ENCODE measurements at regions of chr7 and their contacts with region 1.

Region 1: DNA sequence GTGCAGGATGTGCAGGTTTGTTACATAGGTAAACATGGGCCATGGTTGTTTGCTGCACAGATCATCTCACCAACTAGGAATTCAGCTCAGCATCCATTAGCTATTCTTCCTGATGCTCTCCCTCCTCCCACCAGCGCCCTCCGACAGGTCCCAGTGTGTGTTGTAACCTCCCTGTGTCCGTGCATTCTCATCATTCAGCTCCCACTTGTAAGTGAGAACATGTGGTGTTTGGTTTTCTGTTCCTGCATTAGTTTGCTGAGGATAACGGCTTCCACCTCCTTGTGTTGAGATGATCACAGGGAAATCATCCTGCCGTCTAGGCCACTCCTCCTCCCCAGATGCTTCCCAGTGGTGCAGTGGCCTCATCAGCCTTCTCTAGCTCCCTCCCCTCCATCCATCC is 261.6 kb upstream of the GALNT17 start:
- DNase-seq: no peak
- ATAC-seq: no peak
- H3K4me3 ChIP-seq: no peak overlapping the region
- H3K27ac ChIP-seq: no peak overlapping the region
- H3K4me1 ChIP-seq: no peaks in the 10 kb centered on the region
- H3K27me3 ChIP-seq: no peaks in the 10 kb centered on the region
- CTCF ChIP-seq: no peak
- POLR2A ChIP-seq: no peak

Region 2: DNA sequence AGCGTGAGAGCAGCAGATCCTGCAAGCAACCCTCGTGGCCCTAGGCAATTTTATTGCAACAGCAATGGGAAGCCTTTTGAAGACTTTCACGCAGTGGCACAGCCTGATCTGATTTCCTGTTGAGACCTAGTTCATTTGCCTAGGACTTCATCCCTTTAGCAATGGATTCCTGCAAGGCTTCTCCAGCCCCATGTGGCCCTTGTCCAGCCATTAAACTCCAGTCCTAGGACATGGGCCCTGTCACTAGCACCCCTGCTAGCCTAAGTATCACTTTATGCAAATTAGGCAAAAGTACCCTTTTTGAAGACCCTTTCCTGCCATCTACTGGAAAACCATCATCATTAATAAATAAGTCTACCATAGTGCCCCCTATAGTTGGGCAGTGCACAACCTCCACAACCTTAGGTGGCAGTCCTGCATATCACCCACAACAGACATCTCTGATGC is 641.0 kb after region 1 on chr7:
- intact Hi-C with region 1: loop called in 2 of 10 experiments (anchors 10 kb)
- DNase-seq: no peak
- ATAC-seq: peak in 1 of 4 donors; percentile 30
- H3K4me3 ChIP-seq: no peak overlapping the region
- H3K27ac ChIP-seq: no peak overlapping the region
- H3K4me1 ChIP-seq: no peaks in the 10 kb centered on the region
- H3K27me3 ChIP-seq: no peaks in the 10 kb centered on the region
- CTCF ChIP-seq: peak in 2 of 12 donors; percentile 16 to 29
- POLR2A ChIP-seq: no peak

Measured in heart left ventricle (tissue), 16 donors.